H1 (cell line): ENCODE measurements at regions of chr9 and their contacts with region 1.

Region 1: DNA sequence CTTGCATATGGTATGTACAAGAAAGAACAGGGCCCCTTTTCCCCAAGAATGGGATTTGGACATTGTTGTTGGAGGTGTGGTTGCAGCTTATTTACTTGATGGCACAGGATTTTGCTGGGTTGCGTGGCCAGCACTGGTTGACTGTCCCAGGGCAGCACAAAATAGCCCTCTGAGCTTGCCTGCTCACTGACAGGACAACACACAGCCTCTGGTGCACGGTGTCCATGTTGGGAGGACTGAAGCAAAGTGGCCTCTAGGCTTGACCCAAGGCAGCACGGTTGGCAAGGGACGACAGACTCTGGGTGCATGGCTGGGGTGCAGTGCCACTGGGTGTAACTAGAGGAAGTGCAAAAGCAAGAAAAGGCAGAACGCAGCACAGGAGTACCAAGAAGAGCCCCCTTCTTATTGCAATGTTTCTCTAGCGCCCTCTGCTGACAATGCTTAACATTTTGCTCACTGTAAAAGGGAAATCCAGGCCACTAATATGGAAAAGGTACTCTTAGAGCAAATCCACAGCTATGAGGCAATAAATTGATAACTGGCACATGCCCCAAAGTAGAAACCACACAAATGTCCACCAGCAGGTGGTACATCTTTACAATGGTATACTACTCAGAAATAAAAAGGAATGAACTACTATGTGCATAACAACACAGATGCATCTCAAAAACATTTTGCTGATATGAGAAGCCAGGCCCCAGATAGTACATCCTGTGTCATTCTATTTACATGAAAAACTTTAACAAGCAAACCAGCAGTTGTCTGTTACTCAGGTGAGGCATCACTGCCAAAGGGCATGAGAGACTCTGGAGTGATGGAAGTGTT is 47.4 kb upstream of the BARX1 start:
- DNase-seq: peak in 1 of 2 experiments; percentile 75
- H3K4me3 ChIP-seq: no peak overlapping the region
- H3K27ac ChIP-seq: no peak overlapping the region
- H3K4me1 ChIP-seq: peaks cover 0 to 2% (median under 1%) of the 10 kb centered on the region in 4 experiments; a peak in 2 of 7 replicates
- H3K27me3 ChIP-seq: no peaks in the 10 kb centered on the region
- CTCF ChIP-seq: peak in 2 of 3 experiments; percentile 87 to 89; a peak in 3 of 4 replicates
- EP300 ChIP-seq: no peak
- POLR2A ChIP-seq: no peak
- RAD21 ChIP-seq: peak; percentile 81 to 87

Region 2: GRCh38 chr9:93827545-93828330 is 174.8 kb before region 1 on chr9:
- CTCF ChIA-PET with region 1: interaction called, 12 read pairs
- POLR2A ChIA-PET with region 1: no interaction called
- DNase-seq: peak in 1 of 2 experiments; percentile 89
- H3K4me3 ChIP-seq: peak overlapping the region in 3 of 4 experiments; percentile 12 to 55 (median 19); a peak in 4 of 8 replicates
- H3K27ac ChIP-seq: no peak overlapping the region
- H3K4me1 ChIP-seq: peaks cover 4 to 15% (median 11%) of the 10 kb centered on the region in 4 experiments; a peak in 6 of 7 replicates
- H3K27me3 ChIP-seq: peaks cover 0 to 9% (median 5%) of the 10 kb centered on the region in 4 experiments; a peak in 3 of 7 replicates
- CTCF ChIP-seq: peak in 2 of 3 experiments; percentile 86 to 92; a peak in 3 of 4 replicates
- EP300 ChIP-seq: no peak
- POLR2A ChIP-seq: no peak
- RAD21 ChIP-seq: peak; percentile 57 to 70

Region 3: DNA sequence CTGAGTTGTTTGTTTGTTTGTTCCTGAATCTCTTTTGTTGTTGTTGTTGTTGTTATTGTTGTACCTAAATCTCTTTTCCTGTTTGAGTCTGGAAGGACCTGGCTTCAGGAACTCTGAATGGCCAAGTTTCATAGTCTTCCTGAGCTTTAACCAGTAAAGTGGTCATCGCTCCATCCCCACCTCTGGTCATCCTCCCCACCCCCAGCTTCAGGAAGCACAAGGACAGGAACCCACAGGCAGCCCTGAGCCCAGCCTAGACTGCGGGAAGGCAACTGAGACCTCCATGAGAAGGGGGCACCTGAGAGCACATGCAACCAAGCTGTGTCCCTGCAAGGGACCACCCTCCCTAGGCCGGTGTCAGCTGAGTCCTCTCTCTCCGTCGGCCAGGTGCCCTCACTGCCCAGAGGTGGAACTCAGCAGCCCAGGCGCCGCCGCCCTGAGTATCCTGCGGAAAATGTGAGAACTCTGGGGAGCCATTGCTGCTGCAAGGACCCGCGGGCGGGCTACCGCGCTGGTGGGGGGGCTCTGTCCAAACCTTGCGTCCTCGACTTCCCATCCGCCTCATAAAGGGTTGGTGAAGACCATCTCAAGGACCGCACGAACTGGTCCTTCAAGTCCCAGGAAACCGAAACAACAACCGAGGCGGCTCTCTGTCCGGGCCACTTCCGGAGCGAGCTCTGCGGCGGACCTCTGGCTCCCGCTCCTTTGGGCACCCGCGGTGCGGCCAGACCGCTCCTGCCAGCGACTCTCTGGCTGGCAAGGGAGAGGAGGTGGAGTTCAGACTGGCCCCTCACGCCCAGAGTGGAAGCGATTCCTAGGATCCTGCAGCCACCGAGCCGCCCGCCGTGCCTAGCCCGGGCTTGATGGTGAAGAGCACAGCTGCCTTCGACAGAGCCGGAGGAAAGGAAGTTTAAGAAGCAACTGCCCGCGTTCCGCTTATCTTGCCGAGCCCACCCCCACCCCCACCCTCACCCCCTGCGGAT is 51.6 kb before region 1 on chr9:
- CTCF ChIA-PET with region 1: interaction called, 10 read pairs
- POLR2A ChIA-PET with region 1: no interaction called
- DNase-seq: peak in 1 of 2 experiments; percentile 75
- H3K4me3 ChIP-seq: peak overlapping the region; percentile 14 to 57 (median 24); a peak in 7 of 8 replicates
- H3K27ac ChIP-seq: no peak overlapping the region
- H3K4me1 ChIP-seq: peaks cover 0 to 73% (median 42%) of the 10 kb centered on the region in 4 experiments; a peak in 6 of 7 replicates
- H3K27me3 ChIP-seq: peaks cover 96 to 99% (median 96%) of the 10 kb centered on the region in 4 experiments
- CTCF ChIP-seq: no peak
- EP300 ChIP-seq: no peak
- POLR2A ChIP-seq: no peak
- RAD21 ChIP-seq: no peak

Region 4: DNA sequence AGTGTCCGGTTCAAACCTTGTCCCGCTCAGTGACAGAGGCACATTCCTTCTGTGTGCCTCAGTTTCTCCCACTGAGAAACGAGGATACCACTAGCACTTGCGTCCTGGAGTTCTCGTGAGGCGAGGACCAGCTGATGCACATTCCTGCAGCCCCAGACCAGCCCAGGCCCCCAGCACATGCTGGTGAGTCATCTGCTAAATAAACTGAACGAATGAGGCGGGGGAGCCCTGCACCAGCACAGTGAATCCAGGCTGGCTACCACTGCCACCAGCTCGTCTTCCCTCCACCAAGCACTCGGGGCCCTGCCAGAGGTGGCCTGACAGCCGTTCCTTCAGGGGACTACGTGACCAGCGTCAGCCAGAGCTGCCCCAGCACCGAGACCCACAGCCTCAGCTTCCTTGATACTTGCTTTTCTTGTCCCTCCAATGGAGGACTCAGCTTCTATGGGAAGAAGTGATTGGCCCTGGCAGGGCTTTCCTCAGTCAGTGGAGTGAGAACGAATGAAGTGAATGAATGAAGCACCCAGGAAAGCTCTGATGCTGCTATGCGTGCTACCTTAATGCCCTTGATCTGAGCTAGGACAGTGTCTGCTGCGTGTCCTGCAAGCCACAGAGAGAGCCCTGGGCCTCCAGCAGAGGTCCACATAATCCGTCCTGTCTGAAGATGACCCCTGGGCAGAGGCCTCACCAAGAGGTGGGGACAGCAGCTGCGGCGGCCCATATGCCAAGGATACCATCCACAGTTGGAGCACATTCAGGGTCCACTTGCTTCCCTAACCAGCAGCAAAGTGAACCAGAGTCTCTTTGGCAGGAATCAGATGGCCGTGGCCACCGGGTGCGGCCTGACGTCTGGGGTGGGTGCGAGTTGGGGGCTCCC is 33.8 kb before region 1 on chr9:
- CTCF ChIA-PET with region 1: interaction called, 53 read pairs
- POLR2A ChIA-PET with region 1: no interaction called
- DNase-seq: no peak
- H3K4me3 ChIP-seq: no peak overlapping the region
- H3K27ac ChIP-seq: no peak overlapping the region
- H3K4me1 ChIP-seq: no peaks in the 10 kb centered on the region
- H3K27me3 ChIP-seq: no peaks in the 10 kb centered on the region; a peak in 1 of 7 replicates
- CTCF ChIP-seq: no peak
- EP300 ChIP-seq: no peak
- POLR2A ChIP-seq: no peak
- RAD21 ChIP-seq: no peak

Region 5: GRCh38 chr9:93978551-93978950 is 24.0 kb before region 1 on chr9:
- CTCF ChIA-PET with region 1: interaction called, 53 read pairs
- POLR2A ChIA-PET with region 1: no interaction called
- DNase-seq: no peak
- H3K4me3 ChIP-seq: no peak overlapping the region
- H3K27ac ChIP-seq: no peak overlapping the region
- H3K4me1 ChIP-seq: no peaks in the 10 kb centered on the region
- H3K27me3 ChIP-seq: no peaks in the 10 kb centered on the region
- CTCF ChIP-seq: no peak
- EP300 ChIP-seq: no peak
- POLR2A ChIP-seq: no peak
- RAD21 ChIP-seq: no peak

Region 6: GRCh38 chr9:93984860-93985259 is 17.7 kb before region 1 on chr9:
- CTCF ChIA-PET with region 1: interaction called, 53 read pairs
- POLR2A ChIA-PET with region 1: no interaction called
- DNase-seq: no peak
- H3K4me3 ChIP-seq: no peak overlapping the region
- H3K27ac ChIP-seq: no peak overlapping the region
- H3K4me1 ChIP-seq: peaks cover 0 to 4% (median 0%) of the 10 kb centered on the region in 4 experiments; a peak in 2 of 7 replicates
- H3K27me3 ChIP-seq: no peaks in the 10 kb centered on the region
- CTCF ChIP-seq: no peak
- EP300 ChIP-seq: no peak
- POLR2A ChIP-seq: no peak
- RAD21 ChIP-seq: no peak

Region 7: DNA sequence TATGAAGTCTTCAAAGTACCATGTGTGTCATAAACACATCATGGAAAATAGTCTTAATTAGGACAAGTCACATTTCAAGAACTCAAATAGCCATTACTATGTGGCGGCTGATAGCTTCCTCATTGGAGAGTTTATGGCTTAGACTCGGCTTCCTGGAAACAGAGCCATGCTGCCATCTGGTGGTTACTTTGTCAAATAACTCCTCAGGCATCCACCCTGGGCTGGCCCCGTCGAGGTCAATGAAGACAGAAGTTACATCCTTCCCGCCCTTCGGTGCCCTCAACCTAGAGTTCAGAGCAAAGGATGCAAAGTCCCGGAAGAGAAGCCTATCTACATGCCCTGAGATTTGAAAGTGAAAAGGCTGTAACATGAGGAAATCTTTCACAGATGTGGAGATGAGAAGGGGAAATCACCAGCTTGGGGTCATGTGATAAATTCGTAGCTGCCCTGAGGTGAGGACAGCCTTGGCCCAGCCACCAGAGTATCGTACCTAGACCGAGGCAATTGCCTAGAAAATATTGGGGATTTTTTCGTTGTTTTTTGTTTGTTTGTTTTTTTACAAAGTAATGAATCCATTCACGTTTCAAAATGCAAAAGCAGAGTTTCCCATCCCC is 211.1 kb after region 1 on chr9:
- CTCF ChIA-PET with region 1: interaction called, 27 read pairs
- POLR2A ChIA-PET with region 1: no interaction called
- DNase-seq: peak; percentile 60 to 83
- H3K4me3 ChIP-seq: no peak overlapping the region
- H3K27ac ChIP-seq: no peak overlapping the region
- H3K4me1 ChIP-seq: peaks cover 0 to 10% (median 4%) of the 10 kb centered on the region in 4 experiments; a peak in 5 of 7 replicates
- H3K27me3 ChIP-seq: no peaks in the 10 kb centered on the region
- CTCF ChIP-seq: peak; percentile 39 to 88 (median 83)
- EP300 ChIP-seq: no peak
- POLR2A ChIP-seq: no peak
- RAD21 ChIP-seq: peak; percentile 96 to 97